ENCODE measurements at regions of chr22 and their contacts with region 1.

Region 1: DNA sequence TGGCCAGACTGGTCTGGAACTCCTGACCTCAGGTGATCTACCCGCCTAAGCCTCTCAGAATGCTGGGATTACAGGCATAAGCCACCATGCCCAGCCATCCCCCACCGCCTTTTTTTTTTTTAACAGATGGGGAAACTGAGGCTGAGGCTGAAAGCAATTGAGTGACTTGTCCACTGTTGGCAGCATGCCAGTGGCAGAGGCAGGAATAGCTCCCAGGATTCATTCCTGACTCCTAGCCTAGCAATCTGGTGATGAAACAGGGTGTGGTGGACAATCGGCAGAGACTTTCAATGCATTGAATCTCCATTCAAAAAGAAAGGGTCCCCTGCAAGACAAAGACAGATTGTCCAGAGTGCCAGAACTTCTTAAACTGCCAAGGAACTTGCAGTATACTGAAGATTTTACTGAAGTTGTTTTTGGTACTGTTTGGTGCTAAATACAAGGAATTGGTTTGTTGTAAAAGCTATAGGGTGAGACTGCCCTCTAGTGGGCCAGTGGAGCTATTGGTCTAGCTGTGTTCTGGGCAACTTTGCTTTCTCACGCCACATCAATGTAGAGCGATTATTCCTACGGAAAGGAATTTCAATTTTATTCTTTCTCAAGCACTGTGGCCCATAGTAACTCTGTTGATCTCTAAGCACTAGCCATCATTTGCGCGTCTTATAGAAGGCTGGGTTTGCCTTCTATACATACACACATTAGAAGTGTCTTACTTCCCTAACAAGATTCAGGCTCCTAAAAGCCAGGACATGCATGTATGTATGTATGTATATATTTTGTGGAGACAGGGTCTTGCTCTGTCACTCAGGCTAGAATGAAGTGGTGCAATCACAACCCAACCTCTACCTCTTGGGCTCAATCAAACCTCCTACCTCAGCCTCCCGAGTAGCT is 21.0 kb downstream of the C22orf31 start:
- DNase-seq: peak; percentile 62 to 68 (median 67)
- H3K4me3 ChIP-seq: no peak overlapping the region
- H3K4me3 Mint-ChIP-seq: no peak overlapping the region
- H3K27ac ChIP-seq: no peak overlapping the region
- H3K27ac Mint-ChIP-seq: no peak overlapping the region
- H3K4me1 ChIP-seq: no peaks in the 10 kb centered on the region
- H3K4me1 Mint-ChIP-seq: peaks cover 0 to 3% (median 0%) of the 10 kb centered on the region in 4 donors
- H3K27me3 ChIP-seq: no peaks in the 10 kb centered on the region
- H3K27me3 Mint-ChIP-seq: peaks cover 0 to 3% of the 10 kb centered on the region in 2 donors

Region 2: DNA sequence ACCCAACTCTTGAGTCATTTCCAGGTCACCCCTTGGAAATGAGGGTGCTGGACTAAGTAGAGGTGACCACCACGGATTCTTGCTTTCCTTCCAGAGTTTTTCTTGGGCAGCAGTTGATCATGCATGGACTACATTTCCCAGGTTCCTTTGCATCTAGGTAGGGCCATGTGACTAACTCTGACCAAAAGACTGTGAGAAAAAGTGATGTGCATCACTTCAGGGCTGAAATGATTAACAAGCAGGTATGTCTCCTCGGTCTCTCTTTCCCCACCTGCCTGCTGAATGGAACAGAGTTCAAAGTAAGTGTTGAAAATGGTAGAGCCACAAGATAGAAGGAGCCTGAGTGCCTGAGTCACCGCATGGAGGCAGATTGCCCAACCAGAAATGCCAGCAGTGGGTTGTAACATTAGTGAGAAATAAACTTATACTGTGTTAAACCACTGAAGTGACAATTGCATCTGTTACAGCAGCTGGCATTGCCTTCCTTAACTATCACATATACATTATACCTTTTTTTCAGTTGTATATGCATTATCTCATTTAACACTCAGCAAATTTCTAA is 1352.6 kb before region 1 on chr22:
- CTCF ChIA-PET with region 1: no interaction called
- POLR2A ChIA-PET with region 1: no interaction called
- intact Hi-C with region 1: no loop called
- DNase-seq: no peak
- H3K4me3 ChIP-seq: no peak overlapping the region
- H3K4me3 Mint-ChIP-seq: no peak overlapping the region
- H3K27ac ChIP-seq: no peak overlapping the region
- H3K27ac Mint-ChIP-seq: no peak overlapping the region
- H3K4me1 ChIP-seq: no peaks in the 10 kb centered on the region
- H3K4me1 Mint-ChIP-seq: no peaks in the 10 kb centered on the region
- H3K27me3 ChIP-seq: no peaks in the 10 kb centered on the region
- H3K27me3 Mint-ChIP-seq: peaks cover 9 to 14% of the 10 kb centered on the region in 2 donors

Region 3: GRCh38 chr22:28600546-28601143 is 440.0 kb before region 1 on chr22:
- CTCF ChIA-PET with region 1: interaction called, 68 read pairs
- POLR2A ChIA-PET with region 1: interaction called, 7 read pairs
- intact Hi-C with region 1: loop called (anchors 1 kb)
- DNase-seq: peak; percentile 31 to 63 (median 59)
- H3K4me3 ChIP-seq: no peak overlapping the region
- H3K4me3 Mint-ChIP-seq: no peak overlapping the region
- H3K27ac ChIP-seq: no peak overlapping the region
- H3K27ac Mint-ChIP-seq: no peak overlapping the region
- H3K4me1 ChIP-seq: no peaks in the 10 kb centered on the region
- H3K4me1 Mint-ChIP-seq: no peaks in the 10 kb centered on the region
- H3K27me3 ChIP-seq: peaks cover 13% of the 10 kb centered on the region
- H3K27me3 Mint-ChIP-seq: peaks cover 6 to 14% of the 10 kb centered on the region in 2 donors

Region 4: DNA sequence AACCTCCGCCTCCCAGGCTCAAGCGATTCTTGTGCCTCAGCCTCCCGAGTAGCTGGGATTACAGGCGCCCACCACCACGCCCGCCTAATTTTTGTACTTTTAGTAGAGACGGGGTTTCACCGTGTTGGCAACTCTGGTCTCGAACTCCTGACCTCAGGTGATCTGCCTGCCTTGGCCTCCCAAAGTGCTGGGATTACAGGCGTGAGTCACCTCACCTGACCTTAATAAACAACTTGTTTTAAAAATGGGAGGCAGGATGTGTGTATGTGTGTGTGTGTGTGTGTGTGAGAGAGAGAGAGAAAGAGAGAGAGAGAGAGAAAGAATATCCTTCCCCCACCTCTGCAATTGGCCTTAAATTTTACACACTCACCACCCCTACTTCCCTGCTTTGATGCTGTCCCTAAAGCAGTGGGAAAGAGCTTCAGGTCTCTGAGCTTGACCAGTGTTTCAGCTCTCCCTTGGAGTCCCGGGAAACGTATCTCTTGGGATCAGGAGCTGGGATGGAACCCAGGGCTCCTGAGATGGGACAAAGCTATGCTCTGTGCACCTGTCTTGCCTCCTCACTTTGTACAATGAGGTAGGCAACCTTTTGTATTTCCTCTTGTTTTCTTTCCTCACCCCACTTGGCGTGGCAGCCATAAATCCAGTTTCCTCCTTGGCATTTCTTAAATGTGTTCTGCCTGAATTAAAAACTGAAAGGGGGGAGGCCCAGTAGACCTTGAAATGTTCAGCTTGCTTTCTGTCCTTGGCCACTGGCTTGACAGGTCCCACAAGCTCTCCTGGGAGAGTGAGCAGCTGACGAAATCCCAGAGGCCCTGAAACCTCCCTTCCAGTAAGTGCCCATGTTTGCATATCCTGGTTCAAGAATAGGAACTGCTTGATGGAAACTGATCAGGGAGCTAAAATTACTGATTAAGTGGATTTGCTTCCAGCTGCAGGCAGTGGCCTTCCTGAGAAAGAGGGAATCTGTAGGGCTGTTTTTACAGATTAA is 222.4 kb before region 1 on chr22:
- CTCF ChIA-PET with region 1: no interaction called
- POLR2A ChIA-PET with region 1: no interaction called
- intact Hi-C with region 1: no loop called
- DNase-seq: peak in 1 of 5 donors; percentile 20
- H3K4me3 ChIP-seq: no peak overlapping the region
- H3K4me3 Mint-ChIP-seq: peak overlapping the region; percentile 20 to 78 (median 70)
- H3K27ac ChIP-seq: no peak overlapping the region
- H3K27ac Mint-ChIP-seq: peak overlapping the region; percentile 23 to 94 (median 74)
- H3K4me1 ChIP-seq: peaks cover 70% of the 10 kb centered on the region
- H3K4me1 Mint-ChIP-seq: peaks cover 45 to 85% (median 70%) of the 10 kb centered on the region in 4 donors
- H3K27me3 ChIP-seq: no peaks in the 10 kb centered on the region
- H3K27me3 Mint-ChIP-seq: no peaks in the 10 kb centered on the region

Measured in CD4-positive, alpha-beta memory T cell (primary cell).